ENCODE measurements at regions of chr21 and their contacts with region 1.

Region 1: GRCh38 chr21:42258153-42258884 is 39.4 kb downstream of the ABCG1 start:
- DNase-seq: peak; percentile 87
- ATAC-seq: peak; percentile 92
- H3K4me3 Mint-ChIP-seq: no peak overlapping the region
- H3K27ac Mint-ChIP-seq: no peak overlapping the region
- H3K4me1 Mint-ChIP-seq: peaks cover 18% of the 10 kb centered on the region
- H3K27me3 Mint-ChIP-seq: no peaks in the 10 kb centered on the region

Region 2: DNA sequence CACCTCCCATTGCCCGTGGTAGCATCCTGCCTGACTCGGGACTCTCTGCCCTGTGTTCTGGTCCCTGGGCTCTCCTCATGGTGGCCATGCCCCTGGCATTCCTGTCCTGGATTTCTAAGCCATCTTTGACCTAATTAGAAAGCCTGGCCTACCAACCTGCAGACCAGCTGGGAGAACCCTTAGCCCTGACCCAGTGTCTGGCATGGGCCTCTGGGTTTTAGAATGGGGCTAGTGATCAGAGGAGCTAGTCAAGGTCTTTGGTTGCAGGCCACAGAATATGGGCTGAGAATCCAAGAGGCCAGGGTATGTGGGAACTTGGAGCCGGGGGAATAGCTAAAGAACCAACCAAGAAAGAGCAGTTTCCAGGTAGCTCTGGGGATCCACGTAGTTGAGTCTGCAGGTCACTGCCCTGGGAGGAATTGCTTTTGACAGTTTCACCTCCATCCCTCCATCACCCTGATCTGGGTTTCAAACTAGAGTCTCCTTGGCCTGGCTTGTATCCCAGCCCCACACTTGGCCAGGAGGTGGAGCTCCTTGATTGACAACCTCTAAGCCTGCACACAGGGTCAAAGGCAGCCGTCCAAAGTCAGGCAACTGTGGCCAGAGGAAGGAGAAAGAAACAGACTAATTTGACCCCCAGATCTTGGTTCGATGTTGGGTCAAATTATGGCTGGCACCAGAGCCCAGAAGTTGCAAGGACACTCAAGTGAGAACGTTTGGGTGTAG is 94.1 kb before region 1 on chr21:
- CTCF ChIA-PET with region 1: interaction called, 107 read pairs
- POLR2A ChIA-PET with region 1: no interaction called
- DNase-seq: peak; percentile 71
- ATAC-seq: peak; percentile 66
- H3K4me3 Mint-ChIP-seq: no peak overlapping the region
- H3K27ac Mint-ChIP-seq: no peak overlapping the region
- H3K4me1 Mint-ChIP-seq: peaks cover 40% of the 10 kb centered on the region
- H3K27me3 Mint-ChIP-seq: peaks cover 5% of the 10 kb centered on the region

Region 3: DNA sequence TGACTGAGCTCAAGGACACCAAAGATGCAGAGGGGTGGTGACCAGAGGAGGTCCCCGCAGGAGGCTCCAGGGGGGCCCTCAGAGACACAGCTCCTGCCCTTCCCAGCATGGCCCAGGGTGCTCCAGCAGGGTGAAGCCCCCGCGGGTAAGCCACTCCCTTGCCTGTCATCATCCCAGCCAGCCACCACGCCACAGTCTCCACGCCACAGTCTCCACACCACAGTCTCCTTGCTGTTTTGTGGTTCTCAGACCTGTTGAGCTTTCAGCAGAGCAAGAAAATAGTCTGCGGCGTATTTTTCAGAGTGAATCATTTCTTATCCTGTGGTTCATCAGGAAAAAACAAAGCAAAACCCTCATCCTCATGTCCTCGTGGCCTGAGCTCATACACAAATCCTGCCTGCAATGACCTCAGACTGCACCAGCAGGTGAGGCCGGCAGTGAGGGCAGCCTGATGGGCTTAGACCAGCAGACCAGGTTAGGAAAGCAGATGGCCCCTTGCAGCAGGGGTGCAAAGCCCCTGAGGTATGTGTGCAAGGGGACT is 65.1 kb before region 1 on chr21:
- CTCF ChIA-PET with region 1: interaction called, 29 read pairs
- POLR2A ChIA-PET with region 1: interaction called, 3 read pairs
- DNase-seq: peak; percentile 87
- ATAC-seq: peak; percentile 60
- H3K4me3 Mint-ChIP-seq: peak overlapping the region; percentile 16
- H3K27ac Mint-ChIP-seq: peak overlapping the region; percentile 71
- H3K4me1 Mint-ChIP-seq: peaks cover 77% of the 10 kb centered on the region
- H3K27me3 Mint-ChIP-seq: peaks cover 10% of the 10 kb centered on the region

Region 4: DNA sequence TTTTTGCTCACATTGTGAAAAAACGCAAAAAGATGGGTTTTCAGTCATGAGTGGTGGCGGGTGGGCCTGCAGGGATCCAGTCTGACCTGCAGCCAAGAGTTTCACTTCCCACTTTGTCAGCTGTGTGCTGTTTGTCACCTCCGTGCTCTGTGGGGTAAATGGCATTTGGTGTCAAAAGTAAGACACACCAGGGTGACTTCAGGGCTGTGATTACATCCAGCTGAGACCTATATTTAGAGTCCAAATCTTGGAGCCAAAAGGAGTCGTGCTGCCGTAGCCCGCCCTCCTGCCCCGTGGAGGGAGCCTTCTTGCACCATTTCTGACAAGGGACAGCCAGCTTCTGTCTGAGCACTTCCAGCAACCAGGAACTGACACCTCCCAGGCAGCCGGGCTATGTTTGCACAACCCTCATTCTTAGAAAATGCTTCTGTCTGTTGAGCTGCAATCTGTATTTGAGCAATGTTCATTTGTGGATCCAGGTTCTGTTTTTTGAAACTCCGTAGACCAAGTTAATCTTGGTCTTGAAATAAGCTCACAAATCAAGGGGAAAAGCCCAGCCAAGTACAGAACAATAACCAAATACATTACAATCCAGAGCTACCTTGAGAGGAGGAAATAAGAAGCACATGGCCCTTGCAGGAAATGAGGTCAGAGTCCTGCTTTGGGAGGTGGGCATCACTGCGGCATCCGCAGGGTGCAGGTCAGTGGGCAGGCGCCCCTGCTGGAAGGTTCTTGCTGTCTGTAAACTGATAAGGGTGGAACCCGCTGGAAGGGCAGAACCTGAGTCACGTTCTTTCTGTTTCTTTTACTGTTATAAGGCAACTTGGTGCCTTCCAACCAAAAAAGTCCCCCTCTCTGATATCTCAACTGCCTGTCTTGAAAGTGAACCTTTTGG is 25.0 kb before region 1 on chr21:
- CTCF ChIA-PET with region 1: interaction called, 81 read pairs
- POLR2A ChIA-PET with region 1: interaction called, 3 read pairs
- DNase-seq: peak; percentile 84
- ATAC-seq: peak; percentile 55
- H3K4me3 Mint-ChIP-seq: peak overlapping the region; percentile 63
- H3K27ac Mint-ChIP-seq: peak overlapping the region; percentile 85
- H3K4me1 Mint-ChIP-seq: peaks cover 98% of the 10 kb centered on the region
- H3K27me3 Mint-ChIP-seq: no peaks in the 10 kb centered on the region